ENCODE measurements at regions of chr14 and their contacts with region 1.

Region 1: DNA sequence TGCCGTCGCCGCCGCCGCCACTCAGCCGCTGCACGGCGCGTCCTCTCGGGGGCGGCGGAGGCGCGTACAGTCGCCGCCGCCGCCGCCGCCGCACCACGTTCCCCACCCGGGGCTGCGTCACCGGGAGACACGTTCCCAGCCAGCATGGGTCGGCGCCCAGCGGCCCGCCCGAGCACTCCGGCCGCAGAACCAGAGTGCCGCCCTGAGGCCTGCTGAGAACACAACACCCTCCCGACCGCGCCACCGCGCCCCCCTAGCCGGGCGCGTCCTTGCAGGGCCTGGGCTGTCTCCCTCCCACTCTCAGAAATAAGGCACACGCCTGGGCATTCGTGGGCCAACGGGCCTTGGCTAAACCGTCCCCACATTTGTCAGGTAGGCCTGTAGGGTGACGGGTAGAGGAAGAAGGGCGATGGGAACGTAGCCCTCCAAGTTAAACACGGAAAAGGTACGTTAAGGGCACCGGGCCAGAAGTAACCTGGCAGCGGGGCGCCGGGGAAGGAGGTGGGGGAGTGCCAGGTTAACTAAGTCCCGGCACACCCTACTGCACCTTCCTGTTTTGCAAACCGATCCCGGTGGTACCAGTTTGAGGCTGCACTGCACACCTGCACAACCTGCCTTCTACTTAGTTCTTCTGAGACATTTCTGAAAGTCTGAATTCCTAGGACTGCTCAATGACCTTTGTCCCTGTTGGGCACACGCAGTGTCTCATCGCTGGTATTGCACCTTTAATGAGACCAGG is at the start of gene MAP4K5:
- DNase-seq: peak; percentile 81 to 90 (median 85)
- ATAC-seq: peak; percentile 94
- H3K4me3 ChIP-seq: peak within 1 kb of the TSS; percentile 66
- H3K27ac ChIP-seq: peak within 1 kb of the TSS; percentile 86
- H3K4me1 ChIP-seq: peaks cover 12 to 14% of the 10 kb centered on the region in 2 experiments; a peak in 4 of 5 replicates
- H3K27me3 ChIP-seq: no peaks in the 10 kb centered on the region
- CTCF ChIP-seq: peak; percentile 82 to 95 (median 92)
- EP300 ChIP-seq: no peak
- POLR2A ChIP-seq: no peak
- RAD21 ChIP-seq: peak; percentile 92
- polyA plus RNA-seq, gene MAP4K5: 5.9 TPM

Region 2: GRCh38 chr14:49852301-49853157 is 680.1 kb before region 1 on chr14 and contains the start of gene NEMF:
- CTCF ChIA-PET with region 1: no interaction called
- POLR2A ChIA-PET with region 1: no interaction called
- in situ Hi-C with region 1: loop called (anchors 25 kb)
- intact Hi-C with region 1: no loop called
- DNase-seq: peak; percentile 65 to 89 (median 73)
- ATAC-seq: peak; percentile 88
- H3K4me3 ChIP-seq: peak within 1 kb of the TSS; percentile 84
- H3K27ac ChIP-seq: peak within 1 kb of the TSS; percentile 85
- H3K4me1 ChIP-seq: peaks cover 2 to 4% of the 10 kb centered on the region in 2 experiments; a peak in 4 of 5 replicates
- H3K27me3 ChIP-seq: no peaks in the 10 kb centered on the region; a peak in 1 of 5 replicates
- CTCF ChIP-seq: peak; percentile 73 to 81 (median 74)
- EP300 ChIP-seq: no peak
- POLR2A ChIP-seq: peak; percentile 92
- RAD21 ChIP-seq: peak in 1 of 2 experiments; percentile 31; a peak in 2 of 4 replicates
- polyA plus RNA-seq, gene NEMF: 38.8 to 73.2 TPM

Region 3: GRCh38 chr14:49867831-49868723 is 664.6 kb before region 1 on chr14:
- CTCF ChIA-PET with region 1: no interaction called
- POLR2A ChIA-PET with region 1: no interaction called
- in situ Hi-C with region 1: loop called (anchors 25 kb)
- intact Hi-C with region 1: loop called (anchors 10 kb)
- DNase-seq: peak; percentile 90 to 95 (median 90)
- ATAC-seq: peak; percentile 92
- H3K4me3 ChIP-seq: peak overlapping the region; percentile 57
- H3K27ac ChIP-seq: peak overlapping the region; percentile 68
- H3K4me1 ChIP-seq: peaks cover 10 to 14% of the 10 kb centered on the region in 2 experiments; a peak in 4 of 5 replicates
- H3K27me3 ChIP-seq: no peaks in the 10 kb centered on the region
- CTCF ChIP-seq: no peak
- EP300 ChIP-seq: peak; percentile 44
- POLR2A ChIP-seq: peak; percentile 70
- RAD21 ChIP-seq: no peak

Region 4: GRCh38 chr14:50116181-50116956 is 416.3 kb before region 1 on chr14 and contains the start of gene VCPKMT:
- CTCF ChIA-PET with region 1: no interaction called
- POLR2A ChIA-PET with region 1: no interaction called
- in situ Hi-C with region 1: no loop called
- intact Hi-C with region 1: loop called (anchors 5 kb)
- DNase-seq: peak; percentile 86 to 94 (median 88)
- ATAC-seq: peak; percentile 100
- H3K4me3 ChIP-seq: peak within 1 kb of the TSS; percentile 76
- H3K27ac ChIP-seq: peak within 1 kb of the TSS; percentile 70
- H3K4me1 ChIP-seq: peaks cover 4 to 6% of the 10 kb centered on the region in 2 experiments; a peak in 4 of 5 replicates
- H3K27me3 ChIP-seq: no peaks in the 10 kb centered on the region
- CTCF ChIP-seq: no peak
- EP300 ChIP-seq: no peak
- POLR2A ChIP-seq: peak; percentile 87
- RAD21 ChIP-seq: no peak; a peak in 1 of 4 replicates
- polyA plus RNA-seq, gene VCPKMT: 2.7 to 3.6 TPM

Region 5: DNA sequence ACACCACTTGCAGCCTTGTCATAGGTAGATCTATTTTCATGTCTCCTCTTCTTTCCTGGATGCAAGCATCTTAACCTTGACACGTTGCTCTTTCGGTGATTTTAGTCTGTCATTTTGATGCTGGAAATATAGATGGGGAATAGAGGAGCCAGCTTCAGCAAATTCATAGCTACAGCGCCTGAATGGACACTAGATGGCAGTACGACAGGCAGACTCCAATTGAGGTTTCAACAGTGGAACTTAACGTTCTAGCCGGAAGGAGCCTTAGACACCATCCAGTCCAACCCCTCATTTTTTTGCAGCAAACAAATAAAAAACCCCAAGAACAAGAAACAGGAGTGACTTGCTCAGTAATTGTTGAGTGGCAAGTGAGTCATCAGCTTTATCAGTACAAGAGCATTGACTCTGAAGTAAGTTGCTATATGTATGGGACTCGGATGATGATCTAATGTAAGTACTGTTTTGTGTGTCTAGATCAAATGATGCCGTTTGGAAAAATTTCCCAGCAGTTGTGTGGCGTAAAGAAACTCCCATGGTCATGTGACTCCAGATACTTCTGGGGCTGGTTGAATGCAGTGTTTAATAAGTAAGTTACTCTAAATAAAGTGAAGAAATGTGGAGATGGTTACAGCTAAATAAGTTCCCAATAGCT is 211.5 kb before region 1 on chr14:
- CTCF ChIA-PET with region 1: interaction called, 18 read pairs
- POLR2A ChIA-PET with region 1: interaction called, 4 read pairs
- in situ Hi-C with region 1: loop called (anchors 10 kb)
- intact Hi-C with region 1: loop called (anchors 1 kb)
- DNase-seq: peak; percentile 43 to 85 (median 60)
- ATAC-seq: peak; percentile 96
- H3K4me3 ChIP-seq: 0 out of 2 replicates have a peak overlapping the region, but pooled peaks have one; percentile 12
- H3K27ac ChIP-seq: peak overlapping the region; percentile 79
- H3K4me1 ChIP-seq: peaks cover 0 to 9% of the 10 kb centered on the region in 2 experiments; a peak in 3 of 5 replicates
- H3K27me3 ChIP-seq: no peaks in the 10 kb centered on the region
- CTCF ChIP-seq: peak; percentile 72 to 82 (median 78)
- EP300 ChIP-seq: peak; percentile 51; the same call in 1 of the 2 replicates
- POLR2A ChIP-seq: no peak
- RAD21 ChIP-seq: peak; percentile 60 to 64

Region 6: GRCh38 chr14:50342221-50343078 is 190.2 kb before region 1 on chr14:
- CTCF ChIA-PET with region 1: no interaction called
- POLR2A ChIA-PET with region 1: no interaction called
- in situ Hi-C with region 1: no loop called
- intact Hi-C with region 1: loop called (anchors 1 kb)
- DNase-seq: peak; percentile 43 to 90 (median 70)
- ATAC-seq: peak; percentile 97
- H3K4me3 ChIP-seq: no peak overlapping the region
- H3K27ac ChIP-seq: peak overlapping the region; percentile 45; the same call in 1 of the 3 replicates
- H3K4me1 ChIP-seq: peaks cover 0 to 22% of the 10 kb centered on the region in 2 experiments; a peak in 3 of 5 replicates
- H3K27me3 ChIP-seq: no peaks in the 10 kb centered on the region
- CTCF ChIP-seq: peak; percentile 72 to 84 (median 74)
- EP300 ChIP-seq: peak; percentile 73; the same call in 1 of the 2 replicates
- POLR2A ChIP-seq: no peak
- RAD21 ChIP-seq: peak; percentile 90

Region 7: GRCh38 chr14:50396631-50397390 is 135.9 kb before region 1 on chr14 and contains the start of gene CDKL1:
- CTCF ChIA-PET with region 1: no interaction called
- POLR2A ChIA-PET with region 1: no interaction called
- in situ Hi-C with region 1: no loop called
- intact Hi-C with region 1: loop called (anchors 5 kb)
- DNase-seq: peak; percentile 59 to 76 (median 74)
- ATAC-seq: peak; percentile 88
- H3K4me3 ChIP-seq: peak within 1 kb of the TSS; percentile 60
- H3K27ac ChIP-seq: peak within 1 kb of the TSS; percentile 74
- H3K4me1 ChIP-seq: peaks cover 5 to 15% of the 10 kb centered on the region in 2 experiments; a peak in 4 of 5 replicates
- H3K27me3 ChIP-seq: no peaks in the 10 kb centered on the region
- CTCF ChIP-seq: no peak
- EP300 ChIP-seq: no peak
- POLR2A ChIP-seq: peak; percentile 7; the same call in 1 of the 2 replicates
- RAD21 ChIP-seq: no peak
- polyA plus RNA-seq, gene CDKL1: 2.3 to 4.8 TPM

Measured in K562 (cell line).